ENCODE measurements at regions of chr5 and their contacts with region 1.

Region 1: GRCh38 chr5:133423618-133424282 is 188.6 kb downstream of the FSTL4 start:
- DNase-seq: peak; percentile 37 to 75
- ATAC-seq: peak; percentile 69 to 85 (median 81)
- H3K4me3 ChIP-seq: no peak overlapping the region
- H3K27ac ChIP-seq: no peak overlapping the region
- H3K4me1 ChIP-seq: peaks cover 0 to 7% (median 0%) of the 10 kb centered on the region in 9 donors
- H3K27me3 ChIP-seq: peaks cover 0 to 26% (median 0%) of the 10 kb centered on the region in 7 donors
- CTCF ChIP-seq: peak; percentile 63 to 97 (median 90)

Region 2: GRCh38 chr5:133602835-133603380 is 179.2 kb after region 1 on chr5:
- intact Hi-C with region 1: loop called in 2 of 10 experiments (anchors 5 to 10 kb)
- DNase-seq: no peak
- ATAC-seq: peak in 1 of 8 donors; percentile 36
- H3K4me3 ChIP-seq: no peak overlapping the region
- H3K27ac ChIP-seq: no peak overlapping the region
- H3K4me1 ChIP-seq: peaks cover 0 to 17% (median 0%) of the 10 kb centered on the region in 9 donors
- H3K27me3 ChIP-seq: peaks cover 0 to 7% (median 3%) of the 10 kb centered on the region in 7 donors
- CTCF ChIP-seq: no peak

Region 3: GRCh38 chr5:133610489-133611356 is 187.0 kb after region 1 on chr5:
- intact Hi-C with region 1: loop called (anchors 5 to 10 kb)
- DNase-seq: peak; percentile 45 to 64
- ATAC-seq: peak; percentile 93 to 97 (median 96)
- H3K4me3 ChIP-seq: peak overlapping the region in 9 of 10 donors; percentile 22 to 45 (median 38)
- H3K27ac ChIP-seq: no peak overlapping the region
- H3K4me1 ChIP-seq: peaks cover 8 to 35% (median 15%) of the 10 kb centered on the region in 9 donors
- H3K27me3 ChIP-seq: peaks cover 15 to 84% (median 76%) of the 10 kb centered on the region in 7 donors
- CTCF ChIP-seq: peak; percentile 33 to 73 (median 56)

Region 4: DNA sequence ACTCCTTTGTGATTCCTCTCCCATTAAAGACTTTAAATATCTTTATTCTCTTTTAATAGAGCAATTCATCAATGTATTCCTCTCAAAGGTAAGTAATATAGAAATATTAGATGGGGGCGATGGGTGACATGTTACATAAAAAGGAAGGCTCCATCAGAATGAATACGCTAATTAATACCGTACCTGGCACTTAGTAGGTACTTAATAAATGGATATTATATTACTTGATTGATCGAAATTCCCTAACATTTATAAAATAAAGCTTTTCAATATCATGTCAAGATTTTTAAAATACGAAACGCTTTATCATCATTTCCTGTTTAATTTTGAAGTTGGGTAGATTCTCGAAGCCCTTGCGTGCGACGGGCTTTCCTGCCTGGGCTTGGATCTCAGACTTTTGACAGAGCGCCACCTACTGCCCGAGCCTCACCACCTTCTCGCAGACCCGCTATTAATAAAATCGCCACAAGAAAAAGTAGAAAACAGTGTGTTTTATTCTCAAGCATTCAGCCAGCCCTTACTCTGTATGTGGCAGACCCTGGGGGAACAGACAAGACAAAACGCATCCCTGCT is 445.3 kb after region 1 on chr5:
- intact Hi-C with region 1: loop called in 9 of 10 experiments (anchors 5 to 10 kb)
- DNase-seq: peak; percentile 74
- ATAC-seq: peak; percentile 72 to 90 (median 81)
- H3K4me3 ChIP-seq: peak overlapping the region in 8 of 10 donors; percentile 28 to 47 (median 45)
- H3K27ac ChIP-seq: peak overlapping the region in 6 of 10 donors; percentile 15 to 52 (median 40)
- H3K4me1 ChIP-seq: peaks cover 0 to 10% (median 7%) of the 10 kb centered on the region in 9 donors
- H3K27me3 ChIP-seq: peaks cover 0 to 4% (median 0%) of the 10 kb centered on the region in 7 donors
- CTCF ChIP-seq: peak; percentile 47 to 89 (median 77)

Region 5: GRCh38 chr5:133944263-133945185 is 520.8 kb after region 1 on chr5:
- intact Hi-C with region 1: loop called in 5 of 10 experiments (anchors 5 to 10 kb)
- DNase-seq: peak in 1 of 2 donors; percentile 34
- ATAC-seq: peak in 6 of 8 donors; percentile 30 to 69 (median 64)
- H3K4me3 ChIP-seq: no peak overlapping the region
- H3K27ac ChIP-seq: no peak overlapping the region
- H3K4me1 ChIP-seq: peaks cover 0 to 9% (median 0%) of the 10 kb centered on the region in 9 donors
- H3K27me3 ChIP-seq: no peaks in the 10 kb centered on the region
- CTCF ChIP-seq: peak; percentile 27 to 68 (median 59)

Measured in heart right ventricle (tissue), 16 donors.